Activated T-helper 1 cell treated with anti-CD3 and anti-CD28 coated beads, Interleukin-12 subunit alpha, Interleukin-12 subunit beta, Interleukin-2, Interleukin-4 antibody, amounts not matched to agents 30 ng/mL and 10 ng/mL and 1 ng/mL, durations not matched to agents 14 hours and 24 hours and 36 hours (primary cell): ENCODE measurements at regions of chr4 and their contacts with region 1.

Region 1: DNA sequence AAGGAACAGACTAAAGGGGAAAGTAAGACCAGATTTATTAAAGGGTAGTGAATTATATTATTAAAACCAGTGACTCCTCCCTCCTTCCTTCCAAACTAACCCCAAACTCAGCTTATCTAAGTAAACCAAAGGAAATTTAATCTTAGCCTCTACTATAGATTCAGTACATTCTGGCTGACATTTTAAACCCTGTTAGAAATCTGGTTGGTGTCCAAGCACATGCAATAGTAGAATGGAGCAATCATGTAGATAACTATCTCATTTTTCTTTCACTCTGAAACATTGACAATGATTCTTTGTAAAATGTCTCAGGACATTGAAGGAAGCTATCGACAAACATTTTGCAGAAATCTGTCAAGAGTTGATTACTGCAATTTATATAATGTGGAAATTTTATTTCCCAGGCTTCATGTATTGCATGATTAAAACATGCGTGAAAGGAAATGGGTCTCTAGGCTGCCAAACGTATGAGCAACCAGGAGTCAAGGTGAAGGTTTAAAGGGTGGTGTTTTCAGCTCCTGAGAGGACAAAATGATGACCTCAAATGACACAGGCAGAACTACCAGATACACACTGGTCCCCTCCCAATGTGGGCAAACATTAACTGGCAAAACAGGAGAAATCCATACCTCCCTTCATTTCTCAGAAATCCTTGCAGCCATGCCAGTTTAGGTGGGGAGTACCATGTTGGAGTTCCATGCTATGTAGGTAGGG is 58.2 kb upstream of the RBM47 start:
- DNase-seq: no peak
- H3K4me3 Mint-ChIP-seq: peak overlapping the region; percentile 56
- H3K27ac Mint-ChIP-seq: peak overlapping the region; percentile 97
- H3K4me1 Mint-ChIP-seq: peaks cover 27% of the 10 kb centered on the region
- H3K27me3 Mint-ChIP-seq: peaks cover 2% of the 10 kb centered on the region

Region 2: GRCh38 chr4:40662962-40663604 is 24.8 kb before region 1 on chr4:
- intact Hi-C with region 1: loop called (anchors 1 kb)
- DNase-seq: no peak
- H3K4me3 Mint-ChIP-seq: no peak overlapping the region
- H3K27ac Mint-ChIP-seq: peak overlapping the region; percentile 81
- H3K4me1 Mint-ChIP-seq: peaks cover 31% of the 10 kb centered on the region
- H3K27me3 Mint-ChIP-seq: peaks cover 1% of the 10 kb centered on the region

Region 3: DNA sequence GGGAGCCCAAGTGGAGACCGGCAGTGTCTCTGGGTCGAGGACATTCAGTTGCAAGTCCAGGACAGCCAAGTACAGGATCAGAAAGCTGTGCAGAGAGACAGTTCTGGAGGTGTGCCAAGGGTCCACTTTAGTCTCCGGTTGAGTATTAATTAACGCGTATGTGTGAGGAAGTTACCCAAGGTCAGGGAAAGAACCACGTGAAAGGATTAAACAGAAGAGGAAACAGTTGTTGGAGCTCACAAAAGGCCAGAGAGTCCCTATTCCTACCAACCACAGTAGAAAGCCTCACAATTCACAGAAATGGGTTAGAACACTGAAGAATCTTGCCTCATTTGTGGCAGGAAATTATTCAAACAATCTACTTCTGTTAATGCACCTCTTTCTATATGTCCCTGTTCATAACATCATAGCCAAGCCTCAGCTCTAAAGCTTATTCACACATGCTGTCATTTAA is 44.0 kb after region 1 on chr4:
- intact Hi-C with region 1: no loop called
- DNase-seq: peak; percentile 9
- H3K4me3 Mint-ChIP-seq: peak overlapping the region; percentile 48
- H3K27ac Mint-ChIP-seq: peak overlapping the region; percentile 59
- H3K4me1 Mint-ChIP-seq: peaks cover 37% of the 10 kb centered on the region
- H3K27me3 Mint-ChIP-seq: peaks cover 6% of the 10 kb centered on the region

Region 4: GRCh38 chr4:40763228-40763716 is 75.4 kb after region 1 on chr4:
- intact Hi-C with region 1: loop called (anchors 1 kb)
- DNase-seq: peak; percentile 55
- H3K4me3 Mint-ChIP-seq: peak overlapping the region; percentile 40
- H3K27ac Mint-ChIP-seq: peak overlapping the region; percentile 3
- H3K4me1 Mint-ChIP-seq: peaks cover 11% of the 10 kb centered on the region
- H3K27me3 Mint-ChIP-seq: no peaks in the 10 kb centered on the region